Left lung (tissue), 14 donors: ENCODE measurements at regions of chr9 and their contacts with region 1.

Region 1: GRCh38 chr9:104374711-104375110 is 129.4 kb upstream of the OR13F1 start:
- DNase-seq: no peak
- ATAC-seq: no peak
- H3K4me3 ChIP-seq: no peak overlapping the region
- H3K27ac ChIP-seq: no peak overlapping the region
- H3K4me1 ChIP-seq: no peaks in the 10 kb centered on the region
- H3K27me3 ChIP-seq: no peaks in the 10 kb centered on the region
- CTCF ChIP-seq: no peak

Region 2: GRCh38 chr9:103362986-103363385 is 1011.7 kb before region 1 on chr9:
- intact Hi-C with region 1: no loop called
- DNase-seq: no peak
- ATAC-seq: no peak
- H3K4me3 ChIP-seq: no peak overlapping the region
- H3K27ac ChIP-seq: no peak overlapping the region
- H3K4me1 ChIP-seq: no peaks in the 10 kb centered on the region
- H3K27me3 ChIP-seq: no peaks in the 10 kb centered on the region
- CTCF ChIP-seq: no peak

Region 3: GRCh38 chr9:104177003-104177611 is 197.6 kb before region 1 on chr9:
- intact Hi-C with region 1: no loop called
- DNase-seq: peak in 1 of 4 donors; percentile 5
- ATAC-seq: peak; percentile 64
- H3K4me3 ChIP-seq: no peak overlapping the region
- H3K27ac ChIP-seq: no peak overlapping the region
- H3K4me1 ChIP-seq: no peaks in the 10 kb centered on the region
- H3K27me3 ChIP-seq: no peaks in the 10 kb centered on the region
- CTCF ChIP-seq: peak; percentile 33 to 45

Region 4: GRCh38 chr9:104435059-104435458 is 60.3 kb after region 1 on chr9:
- intact Hi-C with region 1: loop called in 1 of 2 experiments (anchors 10 kb)
- DNase-seq: no peak
- ATAC-seq: no peak
- H3K4me3 ChIP-seq: no peak overlapping the region
- H3K27ac ChIP-seq: no peak overlapping the region
- H3K4me1 ChIP-seq: no peaks in the 10 kb centered on the region
- H3K27me3 ChIP-seq: no peaks in the 10 kb centered on the region
- CTCF ChIP-seq: no peak